HCT116 (cell line): ENCODE measurements at regions of chr11 and their contacts with region 1.

Region 1: DNA sequence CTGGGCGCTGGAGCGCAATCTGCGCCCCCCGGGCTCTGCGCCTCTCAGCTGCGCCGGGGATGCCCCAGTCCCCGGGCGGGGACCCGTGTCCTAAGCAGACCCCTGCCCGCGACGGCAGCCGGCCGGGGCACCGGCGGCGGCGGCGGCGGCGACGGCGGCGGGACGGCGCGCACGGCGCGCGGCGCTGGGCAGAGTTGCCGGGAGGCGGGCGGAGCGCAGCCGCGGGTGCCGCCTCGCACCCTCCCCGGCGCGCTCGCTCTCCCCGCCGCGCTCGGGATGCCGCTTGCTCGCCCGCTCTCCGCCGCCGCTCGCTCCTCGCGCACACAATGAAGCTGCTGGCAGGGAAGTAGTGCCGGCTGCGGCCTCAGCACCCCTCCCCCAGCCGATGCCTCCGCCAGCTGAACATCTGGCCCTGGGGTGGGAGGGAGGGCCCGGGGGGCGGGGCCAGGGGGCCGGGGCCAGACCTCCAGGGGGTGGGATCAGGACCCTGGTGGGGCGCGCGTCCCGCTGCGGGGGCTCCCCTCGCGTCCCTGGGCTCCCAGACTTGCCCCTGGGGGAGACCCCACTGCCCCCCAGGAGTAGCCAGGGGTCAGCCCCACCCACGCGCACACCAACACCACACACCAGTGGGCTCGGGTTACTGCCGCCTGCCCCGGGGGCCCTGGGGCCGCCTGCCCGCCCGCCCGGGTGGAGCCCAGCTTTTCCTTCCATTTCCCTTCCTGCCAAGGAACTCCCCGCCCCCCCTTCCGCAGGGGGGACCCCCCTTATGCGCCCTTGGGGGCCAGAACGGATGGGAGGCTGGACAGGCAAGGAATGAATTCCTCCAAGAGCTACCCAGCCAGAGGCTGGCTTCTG is at the start of gene RCOR2:
- DNase-seq: no peak
- ATAC-seq: peak; percentile 38
- H3K4me3 ChIP-seq: peak within 1 kb of the TSS; percentile 55 to 64
- H3K27ac ChIP-seq: peak within 1 kb of the TSS; percentile 98
- H3K4me1 ChIP-seq: peaks cover 30 to 55% of the 10 kb centered on the region in 2 experiments
- H3K27me3 ChIP-seq: no peaks in the 10 kb centered on the region
- CTCF ChIP-seq: no peak
- POLR2A ChIP-seq: no peak
- RAD21 ChIP-seq: no peak
- total RNA-seq, gene RCOR2: 10.8 TPM

Region 2: GRCh38 chr11:63599211-63600122 is 317.6 kb before region 1 on chr11:
- CTCF ChIA-PET with region 1: no interaction called
- POLR2A ChIA-PET with region 1: no interaction called
- RAD21 ChIA-PET with region 1: no interaction called
- intact Hi-C with region 1: no loop called
- DNase-seq: no peak
- ATAC-seq: 0 out of 2 replicates have a peak, but pooled peaks have one; percentile 46
- H3K4me3 ChIP-seq: no peak overlapping the region
- H3K27ac ChIP-seq: no peak overlapping the region
- H3K4me1 ChIP-seq: 0 out of 4 replicates have a peak, but pooled peaks cover 0 to 2% of the 10 kb centered on the region in 2 experiments
- H3K27me3 ChIP-seq: no peaks in the 10 kb centered on the region
- CTCF ChIP-seq: no peak
- POLR2A ChIP-seq: no peak
- RAD21 ChIP-seq: no peak

Region 3: DNA sequence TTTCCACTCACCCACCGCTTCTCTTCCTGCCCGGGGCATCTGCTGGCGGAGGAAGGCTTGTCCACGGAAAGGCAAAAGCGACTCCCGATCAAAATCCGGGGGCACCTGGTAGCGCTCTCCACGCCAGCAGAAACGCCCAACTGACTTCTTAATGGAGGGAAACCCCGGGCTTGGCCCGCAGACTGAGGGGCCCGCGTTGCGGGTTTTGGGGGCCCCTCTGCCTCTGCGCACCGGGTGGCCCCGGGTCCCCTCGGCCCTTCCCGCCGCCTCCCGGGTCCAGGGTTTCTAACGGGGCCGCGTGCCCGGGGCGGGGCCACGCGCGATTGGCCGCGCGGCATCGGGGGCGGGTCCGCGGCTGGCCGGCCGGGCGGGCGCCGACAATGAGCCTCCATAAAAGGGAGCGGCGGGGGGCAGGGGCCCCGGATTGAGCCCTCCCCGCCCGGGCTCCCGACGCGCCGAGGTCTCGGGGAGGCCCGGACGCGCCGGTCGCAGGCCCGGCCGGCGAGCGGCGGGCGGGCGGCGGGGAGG is 104.0 kb before region 1 on chr11 and contains the start of gene SPINDOC:
- CTCF ChIA-PET with region 1: no interaction called
- POLR2A ChIA-PET with region 1: no interaction called
- RAD21 ChIA-PET with region 1: no interaction called
- intact Hi-C with region 1: no loop called
- DNase-seq: no peak
- ATAC-seq: peak; percentile 89
- H3K4me3 ChIP-seq: peak within 1 kb of the TSS; percentile 81 to 92
- H3K27ac ChIP-seq: peak within 1 kb of the TSS; percentile 91
- H3K4me1 ChIP-seq: peaks cover 10 to 19% of the 10 kb centered on the region in 2 experiments; a peak in 3 of 4 replicates
- H3K27me3 ChIP-seq: no peaks in the 10 kb centered on the region
- CTCF ChIP-seq: no peak
- POLR2A ChIP-seq: peak; percentile 61
- RAD21 ChIP-seq: no peak
- total RNA-seq, gene SPINDOC: 50.9 TPM

Region 4: GRCh38 chr11:63938479-63939396 is 21.7 kb after region 1 on chr11 and contains the start of gene NAA40:
- CTCF ChIA-PET with region 1: interaction called, 7 read pairs
- POLR2A ChIA-PET with region 1: interaction called, 7 read pairs
- RAD21 ChIA-PET with region 1: interaction called, 5 to 6 read pairs
- intact Hi-C with region 1: loop called (anchors 1 kb)
- DNase-seq: peak; percentile 96
- ATAC-seq: peak; percentile 95
- H3K4me3 ChIP-seq: peak within 1 kb of the TSS; percentile 92 to 97
- H3K27ac ChIP-seq: peak within 1 kb of the TSS; percentile 87
- H3K4me1 ChIP-seq: peaks cover 10 to 31% of the 10 kb centered on the region in 2 experiments
- H3K27me3 ChIP-seq: no peaks in the 10 kb centered on the region
- CTCF ChIP-seq: no peak
- POLR2A ChIP-seq: peak; percentile 38
- RAD21 ChIP-seq: no peak
- total RNA-seq, gene NAA40: 25.3 TPM

Region 5: GRCh38 chr11:63945477-63946163 is 28.6 kb after region 1 on chr11:
- CTCF ChIA-PET with region 1: interaction called, 24 read pairs
- POLR2A ChIA-PET with region 1: interaction called, 5 read pairs
- RAD21 ChIA-PET with region 1: interaction called, 3 to 4 read pairs
- intact Hi-C with region 1: no loop called
- DNase-seq: peak; percentile 36
- ATAC-seq: peak; percentile 97
- H3K4me3 ChIP-seq: no peak overlapping the region
- H3K27ac ChIP-seq: peak overlapping the region; percentile 3
- H3K4me1 ChIP-seq: peaks cover 0 to 12% of the 10 kb centered on the region in 2 experiments; a peak in 2 of 4 replicates
- H3K27me3 ChIP-seq: no peaks in the 10 kb centered on the region
- CTCF ChIP-seq: peak; percentile 65 to 87 (median 75)
- POLR2A ChIP-seq: no peak
- RAD21 ChIP-seq: peak; percentile 93

Region 6: DNA sequence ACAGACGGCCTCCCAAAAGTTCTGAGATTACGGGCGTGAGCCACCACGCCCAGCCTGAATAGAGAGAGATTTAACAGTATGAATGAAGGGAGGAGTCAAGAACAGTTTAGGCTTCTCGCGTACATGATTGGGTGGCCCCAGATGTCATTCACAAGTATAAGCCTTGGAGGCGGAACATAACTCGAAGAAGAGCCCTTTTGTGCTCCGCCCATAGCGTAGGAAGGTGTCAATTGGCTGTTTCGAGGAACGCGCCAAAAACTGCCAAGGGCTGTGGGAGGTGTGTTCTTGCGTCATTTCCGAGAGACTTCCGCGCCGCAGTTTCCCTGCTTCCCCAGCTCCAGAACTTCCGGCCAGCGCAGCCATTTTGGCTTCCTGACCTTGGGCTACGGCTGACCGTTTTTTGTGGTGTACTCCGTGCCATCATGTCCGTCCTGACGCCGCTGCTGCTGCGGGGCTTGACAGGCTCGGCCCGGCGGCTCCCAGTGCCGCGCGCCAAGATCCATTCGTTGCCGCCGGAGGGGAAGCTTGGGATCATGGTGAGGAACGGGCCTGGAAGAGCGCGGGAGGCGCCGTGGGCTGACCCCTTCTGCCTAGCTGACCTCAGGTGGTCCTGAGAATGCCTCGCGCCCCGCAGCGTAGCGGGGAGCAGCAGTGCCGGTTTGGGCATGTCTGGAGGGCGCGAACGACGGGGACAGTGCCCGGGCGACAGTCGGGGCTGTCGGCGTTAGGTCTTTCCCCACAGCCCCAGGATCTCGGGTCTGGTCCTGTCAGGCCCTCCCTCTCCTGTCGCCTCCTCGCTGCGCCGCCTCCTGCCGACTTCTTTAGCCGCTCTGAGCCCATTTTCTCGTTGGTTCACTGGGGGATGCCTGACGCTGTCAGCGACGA is 57.4 kb after region 1 on chr11 and contains the start of gene COX8A:
- CTCF ChIA-PET with region 1: no interaction called
- POLR2A ChIA-PET with region 1: no interaction called
- RAD21 ChIA-PET with region 1: no interaction called
- intact Hi-C with region 1: loop called (anchors 2 kb)
- DNase-seq: peak; percentile 100
- ATAC-seq: peak; percentile 97
- H3K4me3 ChIP-seq: peak within 1 kb of the TSS; percentile 97 to 100
- H3K27ac ChIP-seq: peak within 1 kb of the TSS; percentile 96
- H3K4me1 ChIP-seq: peaks cover 10 to 23% of the 10 kb centered on the region in 2 experiments
- H3K27me3 ChIP-seq: no peaks in the 10 kb centered on the region
- CTCF ChIP-seq: no peak
- POLR2A ChIP-seq: no peak
- RAD21 ChIP-seq: no peak
- total RNA-seq, gene COX8A: 536 TPM